Esophagus muscularis mucosa (tissue), 4 donors: ENCODE measurements at regions of chr13 and their contacts with region 1.

Region 1: GRCh38 chr13:57857945-57858344 is 226.4 kb downstream of the PCDH17 start:
- DNase-seq: no peak
- H3K4me3 ChIP-seq: no peak overlapping the region
- H3K27ac ChIP-seq: no peak overlapping the region
- H3K4me1 ChIP-seq: no peaks in the 10 kb centered on the region
- H3K27me3 ChIP-seq: no peaks in the 10 kb centered on the region
- CTCF ChIP-seq: no peak
- EP300 ChIP-seq: no peak
- POLR2A ChIP-seq: no peak

Region 2: DNA sequence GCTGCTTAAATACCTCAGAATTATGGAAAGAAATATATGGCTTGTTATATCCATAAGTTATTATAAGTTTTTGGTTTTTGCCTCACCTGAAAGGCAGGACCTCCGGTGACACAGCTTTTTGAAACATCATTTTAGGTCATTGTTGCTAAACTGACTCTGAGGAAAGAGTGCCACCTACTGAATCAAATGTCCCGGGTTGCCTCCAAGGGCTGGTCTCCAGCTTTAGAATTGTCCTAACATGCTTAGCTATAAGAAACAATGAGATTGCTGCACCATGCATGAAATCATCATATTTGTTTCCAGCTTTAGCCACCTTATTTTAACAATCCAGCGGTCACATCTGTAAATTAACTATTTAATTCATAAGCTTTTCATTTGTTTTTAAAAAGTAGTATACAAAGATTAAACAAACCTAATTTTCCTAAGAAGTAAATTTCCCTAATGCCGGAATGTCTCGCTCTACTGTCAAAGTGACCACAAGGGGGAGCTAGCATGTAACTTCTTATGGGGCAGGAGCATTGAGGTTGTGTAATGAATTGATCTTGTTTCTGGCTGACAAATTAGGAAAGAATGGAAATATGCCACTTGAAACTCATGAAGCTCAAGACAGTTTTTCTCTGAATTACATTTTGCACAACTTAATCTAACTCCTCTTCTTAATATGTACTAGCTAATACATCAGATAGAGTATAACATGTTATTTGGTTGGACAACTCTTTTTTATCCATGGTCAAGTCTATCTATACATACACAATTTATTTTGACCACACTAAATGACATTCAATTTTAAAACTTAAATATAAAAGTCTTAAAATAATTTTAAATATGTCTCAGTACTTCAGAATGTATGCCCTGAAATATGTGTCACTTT is 233.1 kb before region 1 on chr13:
- intact Hi-C with region 1: loop called (anchors 10 kb)
- DNase-seq: no peak
- H3K4me3 ChIP-seq: no peak overlapping the region
- H3K27ac ChIP-seq: no peak overlapping the region
- H3K4me1 ChIP-seq: peaks cover 8 to 10% (median 8%) of the 10 kb centered on the region in 4 donors
- H3K27me3 ChIP-seq: peaks cover 0 to 42% (median 14%) of the 10 kb centered on the region in 4 donors
- CTCF ChIP-seq: peak; percentile 55 to 81 (median 67)
- EP300 ChIP-seq: no peak
- POLR2A ChIP-seq: no peak

Region 3: GRCh38 chr13:57996717-57997116 is 138.8 kb after region 1 on chr13:
- intact Hi-C with region 1: no loop called
- DNase-seq: no peak
- H3K4me3 ChIP-seq: no peak overlapping the region
- H3K27ac ChIP-seq: no peak overlapping the region
- H3K4me1 ChIP-seq: no peaks in the 10 kb centered on the region
- H3K27me3 ChIP-seq: no peaks in the 10 kb centered on the region
- CTCF ChIP-seq: no peak
- EP300 ChIP-seq: no peak
- POLR2A ChIP-seq: no peak

Region 4: DNA sequence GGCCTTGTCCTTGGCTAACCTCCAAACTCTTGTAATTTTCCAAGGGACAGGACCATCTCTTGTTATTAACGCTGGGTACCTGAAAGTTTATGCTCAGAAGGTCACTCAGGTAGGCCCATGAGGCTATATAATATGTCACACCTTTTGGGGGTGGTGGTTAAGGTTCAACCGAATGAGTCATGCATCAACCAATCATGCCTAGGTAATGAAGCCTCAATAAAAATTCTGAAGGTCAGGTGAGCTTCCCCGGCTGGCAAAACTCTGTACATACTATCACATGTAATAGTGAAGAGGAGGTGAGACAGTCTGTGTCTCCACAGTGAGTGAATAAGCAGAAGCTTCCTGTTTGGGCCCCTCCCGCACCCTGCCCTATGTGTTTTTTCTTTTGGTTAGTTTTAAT is 198.5 kb after region 1 on chr13:
- intact Hi-C with region 1: no loop called
- DNase-seq: no peak
- H3K4me3 ChIP-seq: no peak overlapping the region
- H3K27ac ChIP-seq: no peak overlapping the region
- H3K4me1 ChIP-seq: no peaks in the 10 kb centered on the region
- H3K27me3 ChIP-seq: no peaks in the 10 kb centered on the region
- CTCF ChIP-seq: no peak
- EP300 ChIP-seq: no peak
- POLR2A ChIP-seq: no peak